ENCODE measurements at regions of chr17 and their contacts with region 1.

Region 1: GRCh38 chr17:41801374-41802271 is 10.1 kb downstream of the P3H4 start:
- DNase-seq: peak; percentile 50
- H3K4me3 ChIP-seq: no peak overlapping the region
- H3K27ac ChIP-seq: peak overlapping the region; percentile 21
- H3K27me3 ChIP-seq: no peaks in the 10 kb centered on the region
- CTCF ChIP-seq: peak; percentile 97

Region 2: DNA sequence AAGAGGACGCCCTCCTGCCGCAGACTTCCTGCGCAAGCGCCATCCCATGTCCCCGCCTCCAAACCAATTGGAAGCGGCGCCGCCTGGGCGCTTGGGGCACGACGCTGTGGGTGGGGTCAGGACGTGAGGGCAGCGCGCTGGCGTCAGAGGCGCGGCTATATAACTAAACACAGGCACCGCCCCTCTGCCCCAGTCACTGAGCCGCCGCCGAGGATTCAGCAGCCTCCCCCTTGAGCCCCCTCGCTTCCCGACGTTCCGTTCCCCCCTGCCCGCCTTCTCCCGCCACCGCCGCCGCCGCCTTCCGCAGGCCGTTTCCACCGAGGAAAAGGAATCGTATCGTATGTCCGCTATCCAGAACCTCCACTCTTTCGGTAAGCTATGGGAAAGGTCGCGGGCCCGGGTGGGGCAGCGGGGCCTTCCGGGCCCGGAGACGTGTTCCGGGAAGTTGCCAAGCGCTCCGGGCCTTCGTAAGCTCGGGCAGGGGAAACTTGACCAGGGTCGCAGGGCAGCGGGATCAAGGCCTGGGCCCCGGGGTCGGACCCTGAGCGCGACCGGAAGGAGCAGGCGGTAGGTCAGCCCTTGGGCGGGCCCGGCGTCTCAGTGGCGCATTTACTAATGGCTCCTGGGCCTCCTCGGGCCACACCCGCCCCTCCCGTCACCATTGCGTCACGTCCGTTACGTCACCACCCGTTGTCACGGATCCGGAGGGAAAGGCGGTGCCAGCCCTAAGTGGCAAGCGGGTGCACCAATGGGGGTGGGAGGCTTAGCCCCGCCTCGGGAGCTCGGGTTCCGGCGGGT is 112.7 kb before region 1 on chr17 and contains the start of gene EIF1:
- CTCF ChIA-PET with region 1: interaction called, 6 read pairs
- POLR2A ChIA-PET with region 1: interaction called, 12 read pairs
- DNase-seq: peak; percentile 99
- H3K4me3 ChIP-seq: peak within 1 kb of the TSS; percentile 99
- H3K27ac ChIP-seq: peak within 1 kb of the TSS; percentile 100
- H3K27me3 ChIP-seq: peaks cover 4% of the 10 kb centered on the region
- CTCF ChIP-seq: no peak
- polyA plus RNA-seq, gene EIF1: 529 and 549 TPM in 2 replicates

Region 3: GRCh38 chr17:41738077-41738735 is 63.4 kb before region 1 on chr17:
- CTCF ChIA-PET with region 1: interaction called, 81 read pairs
- POLR2A ChIA-PET with region 1: interaction called, 3 read pairs
- DNase-seq: peak; percentile 54
- H3K4me3 ChIP-seq: no peak overlapping the region
- H3K27ac ChIP-seq: no peak overlapping the region
- H3K27me3 ChIP-seq: peaks cover 41% of the 10 kb centered on the region
- CTCF ChIP-seq: peak; percentile 94

Region 4: DNA sequence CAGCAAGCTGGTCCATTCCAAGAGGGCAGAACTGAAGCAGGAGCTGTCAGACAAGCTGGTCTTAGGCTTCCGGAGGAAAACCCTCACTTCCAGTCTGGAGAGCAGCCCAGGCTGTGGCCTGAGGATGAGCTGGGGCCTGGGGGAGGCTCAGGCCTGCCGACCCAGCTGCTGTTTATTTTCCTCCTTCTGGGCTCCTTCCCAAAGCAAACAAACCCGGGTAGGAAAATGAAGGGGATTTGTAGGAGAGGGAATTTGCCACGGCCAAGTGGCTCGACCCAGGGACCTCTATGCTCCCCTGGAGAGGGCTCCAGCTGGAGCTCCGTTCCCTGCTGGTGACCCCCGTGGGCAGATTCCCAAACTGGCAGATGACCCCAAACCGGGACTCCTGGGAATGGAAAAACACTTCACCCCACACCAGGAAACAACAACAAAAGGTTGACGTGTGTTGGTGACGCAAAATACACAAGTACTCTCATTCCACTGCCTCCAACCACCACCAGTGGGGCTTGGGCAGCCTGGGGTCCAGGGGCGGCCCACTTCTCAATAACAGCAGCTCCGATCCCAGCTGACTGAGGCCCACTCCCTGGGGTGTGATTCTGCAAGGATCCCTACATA is 23.9 kb before region 1 on chr17:
- CTCF ChIA-PET with region 1: interaction called, 19 read pairs
- POLR2A ChIA-PET with region 1: interaction called, 3 read pairs
- DNase-seq: peak; percentile 90
- H3K4me3 ChIP-seq: 0 out of 2 replicates have a peak overlapping the region, but pooled peaks have one; percentile 7
- H3K27ac ChIP-seq: peak overlapping the region; percentile 96
- H3K27me3 ChIP-seq: no peaks in the 10 kb centered on the region
- CTCF ChIP-seq: 0 out of 2 replicates have a peak, but pooled peaks have one; percentile 14

Region 5: GRCh38 chr17:41786227-41787020 is 15.2 kb before region 1 on chr17 and contains the start of gene JUP:
- CTCF ChIA-PET with region 1: interaction called, 36 read pairs
- POLR2A ChIA-PET with region 1: interaction called, 17 read pairs
- DNase-seq: peak; percentile 98
- H3K4me3 ChIP-seq: peak within 1 kb of the TSS; percentile 78
- H3K27ac ChIP-seq: no peak within 1 kb of the TSS
- H3K27me3 ChIP-seq: peaks cover 3% of the 10 kb centered on the region
- CTCF ChIP-seq: peak; percentile 30
- polyA plus RNA-seq, gene JUP: 13.5 and 25.7 TPM in 2 replicates

Region 6: GRCh38 chr17:41811549-41812380 is 10.1 kb after region 1 on chr17 and contains the start of gene P3H4:
- CTCF ChIA-PET with region 1: interaction called, 20 read pairs
- POLR2A ChIA-PET with region 1: interaction called, 8 read pairs
- DNase-seq: no peak
- H3K4me3 ChIP-seq: peak within 1 kb of the TSS; percentile 87
- H3K27ac ChIP-seq: peak within 1 kb of the TSS; percentile 83
- H3K27me3 ChIP-seq: no peaks in the 10 kb centered on the region
- CTCF ChIP-seq: peak; percentile 62
- polyA plus RNA-seq, gene P3H4: 51.5 and 58.8 TPM in 2 replicates

Region 7: GRCh38 chr17:41848788-41849187 is 47.2 kb after region 1 on chr17:
- CTCF ChIA-PET with region 1: interaction called, 10 read pairs
- POLR2A ChIA-PET with region 1: no interaction called
- DNase-seq: no peak
- H3K4me3 ChIP-seq: no peak overlapping the region
- H3K27ac ChIP-seq: no peak overlapping the region
- H3K27me3 ChIP-seq: no peaks in the 10 kb centered on the region
- CTCF ChIP-seq: no peak

Region 8: GRCh38 chr17:41982026-41982760 is 180.6 kb after region 1 on chr17:
- CTCF ChIA-PET with region 1: no interaction called
- POLR2A ChIA-PET with region 1: no interaction called
- DNase-seq: no peak
- H3K4me3 ChIP-seq: no peak overlapping the region
- H3K27ac ChIP-seq: no peak overlapping the region
- H3K27me3 ChIP-seq: no peaks in the 10 kb centered on the region
- CTCF ChIP-seq: no peak

Measured in AG04450 (cell line).